ENCODE measurements at regions of chr7 and their contacts with region 1.

Region 1: GRCh38 chr7:41624816-41625215 is 78.1 kb downstream of the INHBA start:
- DNase-seq: no peak
- H3K4me3 ChIP-seq: no peak overlapping the region
- H3K27ac ChIP-seq: no peak overlapping the region
- H3K4me1 ChIP-seq: no peaks in the 10 kb centered on the region
- H3K27me3 ChIP-seq: no peaks in the 10 kb centered on the region
- CTCF ChIP-seq: no peak
- EP300 ChIP-seq: no peak
- POLR2A ChIP-seq: no peak

Region 2: DNA sequence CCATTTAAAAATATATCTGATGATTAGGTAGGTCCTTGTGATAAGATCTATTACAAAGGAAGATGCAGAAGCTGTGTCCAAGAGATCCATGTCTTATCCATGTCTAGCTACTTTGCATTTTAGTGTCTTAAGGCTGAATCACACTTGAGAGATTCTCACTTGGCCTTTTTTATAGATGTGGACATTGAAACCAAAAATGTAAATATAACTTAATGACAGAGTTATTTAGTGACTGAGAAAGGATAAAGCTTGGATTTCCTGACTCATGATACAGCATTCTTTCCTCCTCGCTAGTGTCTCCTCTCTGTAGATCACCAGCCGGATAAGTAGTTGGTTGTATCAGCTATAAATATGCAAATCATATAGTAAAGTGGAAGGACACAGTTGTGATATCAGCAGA is 54.8 kb after region 1 on chr7:
- intact Hi-C with region 1: loop called in 1 of 4 experiments (anchors 5 kb)
- DNase-seq: no peak
- H3K4me3 ChIP-seq: no peak overlapping the region
- H3K27ac ChIP-seq: no peak overlapping the region
- H3K4me1 ChIP-seq: no peaks in the 10 kb centered on the region
- H3K27me3 ChIP-seq: no peaks in the 10 kb centered on the region
- CTCF ChIP-seq: no peak
- EP300 ChIP-seq: no peak
- POLR2A ChIP-seq: no peak